ENCODE measurements at regions of chr2 and their contacts with region 1.

Region 1: DNA sequence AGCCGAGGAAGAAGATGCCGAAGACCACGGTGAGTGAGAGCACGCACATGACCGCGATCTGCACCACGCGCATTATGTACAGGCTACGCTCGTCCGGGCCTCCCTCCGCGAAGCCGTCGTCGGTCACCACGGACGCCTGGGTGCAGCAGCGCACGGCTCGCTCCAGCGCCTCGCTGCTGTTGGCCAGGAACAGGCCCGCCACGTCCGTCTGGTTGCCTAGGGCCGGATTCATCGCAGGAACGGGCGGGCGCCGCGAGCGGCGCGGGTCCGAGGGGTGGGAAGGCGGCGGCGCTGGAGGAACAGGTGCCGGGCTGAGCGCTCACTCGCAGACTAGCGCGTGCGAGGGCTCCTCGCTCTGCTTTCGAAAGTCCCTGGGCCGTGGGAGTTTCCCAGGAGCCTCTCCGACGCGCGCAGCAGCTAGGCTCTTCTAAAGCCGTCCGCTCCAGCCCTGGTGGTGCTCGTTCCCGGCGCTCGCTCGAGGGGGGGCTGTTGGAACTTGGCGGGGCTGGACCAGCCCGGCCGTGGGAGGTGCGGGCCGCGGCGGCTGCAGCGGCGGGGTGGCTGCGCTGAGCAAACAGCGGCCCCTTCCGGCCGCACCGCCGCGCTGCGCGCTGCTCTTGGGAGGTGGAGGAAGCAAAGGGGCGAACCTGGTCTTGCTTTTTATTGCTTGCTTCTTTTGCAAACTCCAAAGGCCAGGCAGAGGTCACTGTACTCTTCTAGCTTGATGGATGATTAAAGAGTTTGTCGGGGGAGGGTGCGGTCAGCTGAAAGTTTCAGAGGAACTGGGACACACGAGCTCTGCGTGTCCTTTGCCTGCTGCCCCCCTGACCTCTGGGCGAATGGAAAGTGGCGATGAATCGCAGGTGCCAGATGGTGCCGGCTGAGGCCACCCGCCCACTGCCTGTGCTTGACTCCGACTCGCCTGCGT is at the start of gene RPRM:
- DNase-seq: no peak
- ATAC-seq: peak; percentile 97
- H3K4me3 ChIP-seq: peak within 1 kb of the TSS; percentile 47; the same call in 1 of the 2 replicates
- H3K27ac ChIP-seq: no peak within 1 kb of the TSS
- H3K4me1 ChIP-seq: peaks cover 4% of the 10 kb centered on the region
- H3K27me3 ChIP-seq: peaks cover 6 to 19% of the 10 kb centered on the region in 2 experiments
- CTCF ChIP-seq: peak; percentile 73 to 79 (median 76)
- EP300 ChIP-seq: no peak
- POLR2A ChIP-seq: no peak
- RAD21 ChIP-seq: peak; percentile 53
- polyA plus RNA-seq, gene RPRM: not detected

Region 2: DNA sequence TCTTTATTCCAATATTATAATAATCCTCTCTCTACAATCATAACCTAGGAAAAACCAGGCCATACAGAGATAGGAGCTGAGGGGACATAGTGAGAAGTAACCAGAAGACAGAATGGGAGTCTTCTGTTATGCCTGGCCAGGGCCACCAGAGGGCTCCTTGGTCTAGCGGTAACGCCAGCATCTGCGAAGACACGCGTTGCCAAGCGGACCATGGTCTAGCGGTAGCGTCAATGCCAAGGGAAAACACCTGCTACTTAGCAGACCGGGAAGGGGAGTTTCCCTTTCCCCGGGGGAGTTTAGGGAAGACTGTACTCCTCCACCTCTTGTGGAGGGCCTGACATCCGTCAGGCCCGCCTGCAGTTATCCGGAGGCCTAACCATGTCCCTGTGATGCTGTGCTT is 723.6 kb before region 1 on chr2:
- CTCF ChIA-PET with region 1: no interaction called
- POLR2A ChIA-PET with region 1: no interaction called
- RAD21 ChIA-PET with region 1: no interaction called
- SMC1A ChIA-PET with region 1: no interaction called
- in situ Hi-C with region 1: no loop called
- intact Hi-C with region 1: loop called (anchors 5 kb)
- DNase-seq: peak; percentile 26
- ATAC-seq: peak; percentile 53
- H3K4me3 ChIP-seq: no peak overlapping the region
- H3K27ac ChIP-seq: no peak overlapping the region
- H3K4me1 ChIP-seq: no peaks in the 10 kb centered on the region
- H3K27me3 ChIP-seq: no peaks in the 10 kb centered on the region
- CTCF ChIP-seq: peak; percentile 35 to 66 (median 60); a peak in 5 of 6 replicates
- EP300 ChIP-seq: no peak
- POLR2A ChIP-seq: no peak
- RAD21 ChIP-seq: no peak

Region 3: DNA sequence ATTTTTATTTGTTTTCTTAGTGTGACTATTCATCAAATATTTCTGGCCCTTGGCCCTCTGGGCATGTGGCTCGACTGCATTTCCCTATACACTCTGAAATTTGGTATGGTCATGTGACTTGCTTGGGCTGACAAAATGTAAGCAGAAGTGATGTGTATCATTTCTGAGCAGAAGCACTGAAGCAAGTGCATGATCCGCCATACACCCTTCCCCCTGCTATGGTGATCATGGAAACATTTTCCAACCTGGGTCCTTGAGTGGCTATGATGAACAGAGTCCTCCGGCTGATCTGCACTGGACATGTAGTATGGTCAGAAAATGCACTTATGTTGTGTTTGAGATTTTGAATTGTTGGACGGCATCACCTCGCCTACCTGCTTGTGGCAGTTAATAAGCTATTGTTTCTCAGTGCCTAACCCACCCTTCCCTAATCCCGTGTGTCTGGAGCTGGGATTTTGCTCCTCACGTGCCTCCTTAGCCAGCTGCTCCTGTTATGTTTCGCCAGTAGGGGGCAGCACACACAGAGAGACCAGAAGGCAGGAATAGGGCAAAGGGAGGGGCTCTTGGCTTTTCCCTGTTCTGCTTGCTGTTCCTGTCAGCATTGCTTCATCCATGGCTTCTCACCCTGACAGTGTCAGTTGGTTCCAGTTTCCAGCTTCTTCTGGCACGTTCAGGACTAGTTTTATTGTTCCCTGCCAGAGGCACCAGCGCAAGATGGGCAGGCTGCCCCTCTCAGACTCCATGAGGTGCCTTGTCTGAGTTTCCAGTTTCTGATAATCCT is 552.9 kb before region 1 on chr2:
- CTCF ChIA-PET with region 1: interaction called, 3 read pairs
- POLR2A ChIA-PET with region 1: no interaction called
- RAD21 ChIA-PET with region 1: interaction called, 4 read pairs
- SMC1A ChIA-PET with region 1: interaction called, 3 read pairs
- in situ Hi-C with region 1: no loop called
- intact Hi-C with region 1: loop called (anchors 1 kb)
- DNase-seq: peak; percentile 11
- ATAC-seq: peak; percentile 98
- H3K4me3 ChIP-seq: no peak overlapping the region
- H3K27ac ChIP-seq: no peak overlapping the region
- H3K4me1 ChIP-seq: no peaks in the 10 kb centered on the region
- H3K27me3 ChIP-seq: no peaks in the 10 kb centered on the region
- CTCF ChIP-seq: peak; percentile 65 to 86 (median 81)
- EP300 ChIP-seq: no peak
- POLR2A ChIP-seq: no peak
- RAD21 ChIP-seq: peak; percentile 79

Region 4: GRCh38 chr2:153163058-153163457 is 315.5 kb before region 1 on chr2:
- CTCF ChIA-PET with region 1: interaction called, 4 read pairs
- POLR2A ChIA-PET with region 1: no interaction called
- RAD21 ChIA-PET with region 1: no interaction called
- SMC1A ChIA-PET with region 1: interaction called, 3 read pairs
- in situ Hi-C with region 1: no loop called
- intact Hi-C with region 1: loop called (anchors 1 kb)
- DNase-seq: no peak
- ATAC-seq: peak; percentile 79
- H3K4me3 ChIP-seq: no peak overlapping the region
- H3K27ac ChIP-seq: no peak overlapping the region
- H3K4me1 ChIP-seq: no peaks in the 10 kb centered on the region
- H3K27me3 ChIP-seq: no peaks in the 10 kb centered on the region; a peak in 1 of 4 replicates
- CTCF ChIP-seq: peak; percentile 48 to 55 (median 51); a peak in 5 of 6 replicates
- EP300 ChIP-seq: no peak
- POLR2A ChIP-seq: no peak
- RAD21 ChIP-seq: peak; percentile 73

Region 5: DNA sequence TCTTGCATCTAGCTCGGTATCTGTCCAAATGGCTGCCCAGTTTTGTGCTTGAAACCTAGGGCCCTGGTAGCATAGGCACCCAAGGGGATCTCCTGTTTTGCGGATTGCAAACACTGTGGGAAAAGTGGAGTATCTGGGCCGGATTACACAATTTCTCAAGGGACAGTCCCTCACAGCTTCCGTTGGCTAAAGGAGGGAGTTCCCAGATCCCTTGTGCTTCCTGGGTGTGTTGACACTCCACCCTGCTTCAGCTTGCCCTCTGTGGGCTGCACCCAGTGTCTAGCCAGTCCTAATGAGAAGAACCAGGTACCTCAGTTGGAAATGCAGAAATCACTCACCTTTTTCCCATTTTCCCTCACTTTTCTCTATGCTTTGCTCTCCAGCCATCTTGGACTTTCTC is 35.5 kb before region 1 on chr2:
- CTCF ChIA-PET with region 1: no interaction called
- POLR2A ChIA-PET with region 1: no interaction called
- RAD21 ChIA-PET with region 1: no interaction called
- SMC1A ChIA-PET with region 1: no interaction called
- in situ Hi-C with region 1: no loop called
- intact Hi-C with region 1: no loop called
- DNase-seq: no peak
- ATAC-seq: no peak
- H3K4me3 ChIP-seq: no peak overlapping the region
- H3K27ac ChIP-seq: no peak overlapping the region
- H3K4me1 ChIP-seq: no peaks in the 10 kb centered on the region
- H3K27me3 ChIP-seq: no peaks in the 10 kb centered on the region
- CTCF ChIP-seq: no peak
- EP300 ChIP-seq: no peak
- POLR2A ChIP-seq: no peak
- RAD21 ChIP-seq: no peak